Mammary epithelial cell (primary cell): ENCODE measurements at regions of chr7 and their contacts with region 1.

Region 1: GRCh38 chr7:116271963-116272839 is 61.9 kb downstream of the TES start:
- DNase-seq: peak; percentile 95
- H3K4me3 ChIP-seq: peak overlapping the region in 2 of 3 experiments; percentile 17 to 18
- H3K27ac ChIP-seq: peak overlapping the region; percentile 93
- H3K4me1 ChIP-seq: peaks cover 38% of the 10 kb centered on the region
- H3K27me3 ChIP-seq: no peaks in the 10 kb centered on the region
- CTCF ChIP-seq: no peak

Region 2: DNA sequence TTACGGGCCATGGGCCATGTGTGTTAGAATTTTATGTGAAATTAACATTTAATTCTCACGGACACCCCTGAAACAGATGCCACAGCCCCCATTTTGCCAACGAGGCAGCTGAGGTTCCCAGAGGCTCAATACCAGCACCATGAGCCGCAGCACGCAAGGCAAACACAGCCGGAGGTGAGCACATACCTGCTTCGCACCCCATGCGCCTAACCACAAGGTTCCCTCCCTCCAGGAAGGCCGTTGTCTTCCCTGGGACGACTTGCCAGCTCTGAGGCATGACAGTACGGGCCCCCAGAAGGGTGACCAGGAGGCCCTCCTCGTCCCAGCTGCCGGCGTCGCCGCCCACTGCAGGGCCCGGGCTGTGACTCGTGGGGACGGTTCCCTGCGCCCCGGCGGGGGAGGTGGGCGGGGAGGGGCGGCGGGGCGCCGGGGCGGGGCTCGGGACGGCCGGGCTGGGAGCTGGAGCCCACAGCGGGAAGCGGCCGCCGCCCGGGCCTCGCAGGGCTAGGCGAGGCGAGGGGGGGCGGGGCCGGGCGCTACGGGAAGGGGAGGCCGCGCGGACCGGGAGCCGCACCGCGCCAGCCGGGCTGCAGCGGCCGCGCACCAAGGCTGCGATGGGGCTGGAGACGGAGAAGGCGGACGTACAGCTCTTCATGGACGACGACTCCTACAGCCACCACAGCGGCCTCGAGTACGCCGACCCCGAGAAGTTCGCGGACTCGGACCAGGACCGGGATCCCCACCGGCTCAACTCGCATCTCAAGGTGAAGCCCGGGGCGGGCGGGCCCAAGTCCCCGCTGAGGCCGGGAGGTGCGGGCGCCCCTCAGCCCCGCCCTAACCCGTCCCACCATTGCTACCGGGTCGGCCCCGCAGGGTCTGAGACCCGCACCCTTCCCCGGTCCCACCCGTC is 227.2 kb after region 1 on chr7 and contains the start of gene CAV2:
- CTCF ChIA-PET with region 1: no interaction called
- dilution Hi-C with region 1: no loop called
- in situ Hi-C with region 1: no loop called
- intact Hi-C with region 1: loop called (anchors 5 kb)
- DNase-seq: peak; percentile 96
- H3K4me3 ChIP-seq: peak within 1 kb of the TSS; percentile 59 to 98 (median 80)
- H3K27ac ChIP-seq: peak within 1 kb of the TSS; percentile 99
- H3K4me1 ChIP-seq: peaks cover 34% of the 10 kb centered on the region
- H3K27me3 ChIP-seq: no peaks in the 10 kb centered on the region
- CTCF ChIP-seq: no peak
- total RNA-seq, gene CAV2: 253 to 385 TPM

Region 3: GRCh38 chr7:116679500-116679899 is 407.3 kb after region 1 on chr7:
- CTCF ChIA-PET with region 1: no interaction called
- dilution Hi-C with region 1: no loop called
- in situ Hi-C with region 1: no loop called
- intact Hi-C with region 1: loop called (anchors 5 kb)
- DNase-seq: peak; percentile 97
- H3K4me3 ChIP-seq: peak overlapping the region in 1 of 3 experiments; percentile 12
- H3K27ac ChIP-seq: peak overlapping the region; percentile 99
- H3K4me1 ChIP-seq: peaks cover 47% of the 10 kb centered on the region
- H3K27me3 ChIP-seq: no peaks in the 10 kb centered on the region
- CTCF ChIP-seq: no peak

Region 4: GRCh38 chr7:116706668-116707126 is 434.5 kb after region 1 on chr7:
- CTCF ChIA-PET with region 1: interaction called, 10 read pairs
- dilution Hi-C with region 1: no loop called
- in situ Hi-C with region 1: no loop called
- intact Hi-C with region 1: no loop called
- DNase-seq: peak; percentile 74
- H3K4me3 ChIP-seq: peak overlapping the region; percentile 22 to 52 (median 31)
- H3K27ac ChIP-seq: peak overlapping the region; percentile 90
- H3K4me1 ChIP-seq: peaks cover 76% of the 10 kb centered on the region
- H3K27me3 ChIP-seq: no peaks in the 10 kb centered on the region
- CTCF ChIP-seq: no peak